CD8-positive, alpha-beta memory T cell (primary cell): ENCODE measurements at regions of chr1 and their contacts with region 1.

Region 1: GRCh38 chr1:25810341-25811299 is 9.1 kb upstream of the MTFR1L start:
- DNase-seq: peak; percentile 70 to 83 (median 74)
- H3K4me3 ChIP-seq: no peak overlapping the region
- H3K4me3 Mint-ChIP-seq: no peak overlapping the region
- H3K27ac ChIP-seq: no peak overlapping the region
- H3K27ac Mint-ChIP-seq: peak overlapping the region in 1 of 8 donors; percentile 33
- H3K4me1 ChIP-seq: peaks cover 8% of the 10 kb centered on the region
- H3K4me1 Mint-ChIP-seq: peaks cover 0 to 5% (median 2%) of the 10 kb centered on the region in 3 donors
- H3K27me3 ChIP-seq: no peaks in the 10 kb centered on the region
- H3K27me3 Mint-ChIP-seq: no peaks in the 10 kb centered on the region

Region 2: DNA sequence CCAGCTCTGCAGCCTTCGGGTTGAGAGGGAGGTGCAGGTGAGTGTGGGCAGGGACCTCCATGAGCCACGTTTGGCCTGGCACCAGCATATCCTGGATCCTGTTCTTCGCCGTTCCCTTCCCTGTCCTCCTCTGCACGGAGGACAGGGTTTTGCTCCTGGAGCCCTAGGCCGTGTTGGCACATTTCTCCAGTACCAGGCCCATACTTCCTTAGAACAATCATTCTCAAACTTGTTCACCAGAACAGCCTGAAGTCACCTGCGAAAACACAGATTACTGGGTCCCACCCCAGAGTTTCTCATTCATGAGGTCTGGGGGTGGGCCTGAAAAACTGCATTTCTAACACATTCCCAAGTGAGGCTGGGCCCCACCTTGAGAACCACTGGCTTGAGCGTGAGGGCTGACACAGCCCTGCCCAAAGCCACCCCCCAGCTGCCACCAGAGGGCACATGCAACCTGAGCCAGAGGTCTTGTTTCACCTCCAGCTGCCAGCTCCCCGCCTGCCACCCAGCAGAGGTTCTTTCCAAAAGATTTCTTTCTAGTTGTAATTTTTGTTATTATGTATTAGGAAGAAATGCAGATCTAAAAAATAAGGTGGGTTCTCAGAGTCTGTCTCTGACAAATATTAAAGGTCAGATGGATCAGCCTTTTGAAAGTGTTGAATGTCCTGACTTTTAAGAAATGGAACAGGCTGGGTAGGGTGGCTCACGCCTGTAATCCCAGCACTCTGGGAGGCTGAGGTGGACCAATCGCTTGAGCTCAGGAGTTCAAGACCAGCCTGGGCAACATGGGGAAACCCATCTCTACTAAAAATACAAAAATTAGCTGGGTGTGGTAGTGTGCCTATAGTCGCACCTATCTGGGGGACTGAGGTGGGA is 306.8 kb before region 1 on chr1:
- CTCF ChIA-PET with region 1: interaction called, 20 read pairs
- POLR2A ChIA-PET with region 1: no interaction called
- DNase-seq: peak; percentile 43 to 78 (median 53)
- H3K4me3 ChIP-seq: no peak overlapping the region
- H3K4me3 Mint-ChIP-seq: no peak overlapping the region
- H3K27ac ChIP-seq: no peak overlapping the region
- H3K27ac Mint-ChIP-seq: peak overlapping the region in 5 of 8 donors; percentile 26 to 94 (median 39)
- H3K4me1 ChIP-seq: peaks cover 23% of the 10 kb centered on the region
- H3K4me1 Mint-ChIP-seq: peaks cover 8 to 25% (median 19%) of the 10 kb centered on the region in 3 donors
- H3K27me3 ChIP-seq: no peaks in the 10 kb centered on the region
- H3K27me3 Mint-ChIP-seq: no peaks in the 10 kb centered on the region

Region 3: DNA sequence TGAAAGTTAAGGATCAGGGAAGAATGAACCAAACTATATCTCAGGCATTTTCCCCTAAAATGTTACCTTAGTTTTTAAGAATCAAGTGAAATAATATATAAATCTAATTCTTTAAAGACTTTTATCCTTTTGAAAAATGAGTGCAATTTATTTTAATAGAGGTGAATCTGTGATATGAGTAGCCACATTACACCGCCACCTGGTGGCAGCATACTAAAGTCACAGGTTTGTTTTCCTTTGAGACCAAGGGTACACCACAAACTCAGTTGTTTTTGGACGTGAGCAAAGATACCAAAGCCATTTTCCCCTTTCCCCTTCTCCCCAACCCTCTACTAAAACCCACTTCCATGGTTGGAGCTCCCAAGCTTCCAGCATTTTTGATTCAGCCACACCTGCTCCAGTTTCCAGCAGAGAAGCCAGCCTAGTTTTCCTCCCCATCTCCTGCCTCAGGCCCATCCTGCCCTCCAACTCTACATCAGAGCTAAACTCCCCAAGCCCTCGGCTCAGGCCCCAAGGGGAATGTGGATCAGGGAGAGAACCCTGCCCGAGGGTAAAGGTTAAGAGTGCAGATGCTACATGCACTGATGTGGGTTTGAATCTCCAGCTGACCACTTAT is 290.1 kb before region 1 on chr1:
- CTCF ChIA-PET with region 1: interaction called, 14 read pairs
- POLR2A ChIA-PET with region 1: no interaction called
- DNase-seq: peak; percentile 43 to 77 (median 60)
- H3K4me3 ChIP-seq: no peak overlapping the region
- H3K4me3 Mint-ChIP-seq: no peak overlapping the region
- H3K27ac ChIP-seq: no peak overlapping the region
- H3K27ac Mint-ChIP-seq: peak overlapping the region in 7 of 8 donors; percentile 19 to 90 (median 65)
- H3K4me1 ChIP-seq: peaks cover 6% of the 10 kb centered on the region
- H3K4me1 Mint-ChIP-seq: peaks cover 9 to 11% (median 10%) of the 10 kb centered on the region in 3 donors
- H3K27me3 ChIP-seq: no peaks in the 10 kb centered on the region
- H3K27me3 Mint-ChIP-seq: peaks cover 0 to 3% of the 10 kb centered on the region in 2 donors

Region 4: GRCh38 chr1:25572708-25573600 is 237.7 kb before region 1 on chr1:
- CTCF ChIA-PET with region 1: interaction called, 10 read pairs
- POLR2A ChIA-PET with region 1: no interaction called
- DNase-seq: peak in 4 of 5 donors; percentile 27 to 68 (median 46)
- H3K4me3 ChIP-seq: no peak overlapping the region
- H3K4me3 Mint-ChIP-seq: peak overlapping the region in 2 of 7 donors; percentile 24 to 27
- H3K27ac ChIP-seq: no peak overlapping the region
- H3K27ac Mint-ChIP-seq: peak overlapping the region in 4 of 8 donors; percentile 22 to 79 (median 54)
- H3K4me1 ChIP-seq: peaks cover 42% of the 10 kb centered on the region
- H3K4me1 Mint-ChIP-seq: peaks cover 19 to 63% (median 21%) of the 10 kb centered on the region in 3 donors
- H3K27me3 ChIP-seq: no peaks in the 10 kb centered on the region
- H3K27me3 Mint-ChIP-seq: no peaks in the 10 kb centered on the region

Region 5: GRCh38 chr1:25608488-25609178 is 202.0 kb before region 1 on chr1:
- CTCF ChIA-PET with region 1: interaction called, 24 read pairs
- POLR2A ChIA-PET with region 1: interaction called, 3 read pairs
- DNase-seq: peak; percentile 79 to 89 (median 82)
- H3K4me3 ChIP-seq: peak overlapping the region; percentile 45
- H3K4me3 Mint-ChIP-seq: peak overlapping the region in 5 of 7 donors; percentile 2 to 63 (median 25)
- H3K27ac ChIP-seq: no peak overlapping the region
- H3K27ac Mint-ChIP-seq: peak overlapping the region in 4 of 8 donors; percentile 3 to 21 (median 10)
- H3K4me1 ChIP-seq: no peaks in the 10 kb centered on the region
- H3K4me1 Mint-ChIP-seq: peaks cover 4 to 21% (median 19%) of the 10 kb centered on the region in 3 donors
- H3K27me3 ChIP-seq: no peaks in the 10 kb centered on the region
- H3K27me3 Mint-ChIP-seq: peaks cover 4 to 5% of the 10 kb centered on the region in 2 donors

Region 6: GRCh38 chr1:25774921-25775801 is 35.5 kb before region 1 on chr1:
- CTCF ChIA-PET with region 1: interaction called, 10 read pairs
- POLR2A ChIA-PET with region 1: no interaction called
- DNase-seq: peak; percentile 62 to 94 (median 90)
- H3K4me3 ChIP-seq: peak overlapping the region; percentile 59
- H3K4me3 Mint-ChIP-seq: peak overlapping the region; percentile 35 to 89 (median 78)
- H3K27ac ChIP-seq: no peak overlapping the region
- H3K27ac Mint-ChIP-seq: peak overlapping the region; percentile 79 to 99 (median 92)
- H3K4me1 ChIP-seq: peaks cover 72% of the 10 kb centered on the region
- H3K4me1 Mint-ChIP-seq: peaks cover 41 to 55% (median 51%) of the 10 kb centered on the region in 3 donors
- H3K27me3 ChIP-seq: no peaks in the 10 kb centered on the region
- H3K27me3 Mint-ChIP-seq: no peaks in the 10 kb centered on the region

Region 7: GRCh38 chr1:25796811-25797458 is 13.7 kb before region 1 on chr1:
- CTCF ChIA-PET with region 1: interaction called, 13 read pairs
- POLR2A ChIA-PET with region 1: no interaction called
- DNase-seq: peak; percentile 71 to 87 (median 75)
- H3K4me3 ChIP-seq: peak overlapping the region; percentile 42
- H3K4me3 Mint-ChIP-seq: peak overlapping the region; percentile 59 to 81 (median 71)
- H3K27ac ChIP-seq: peak overlapping the region; percentile 3
- H3K27ac Mint-ChIP-seq: peak overlapping the region; percentile 73 to 95 (median 90)
- H3K4me1 ChIP-seq: peaks cover 55% of the 10 kb centered on the region
- H3K4me1 Mint-ChIP-seq: peaks cover 35 to 57% (median 41%) of the 10 kb centered on the region in 3 donors
- H3K27me3 ChIP-seq: no peaks in the 10 kb centered on the region
- H3K27me3 Mint-ChIP-seq: peaks cover 0 to 3% of the 10 kb centered on the region in 2 donors

Region 8: DNA sequence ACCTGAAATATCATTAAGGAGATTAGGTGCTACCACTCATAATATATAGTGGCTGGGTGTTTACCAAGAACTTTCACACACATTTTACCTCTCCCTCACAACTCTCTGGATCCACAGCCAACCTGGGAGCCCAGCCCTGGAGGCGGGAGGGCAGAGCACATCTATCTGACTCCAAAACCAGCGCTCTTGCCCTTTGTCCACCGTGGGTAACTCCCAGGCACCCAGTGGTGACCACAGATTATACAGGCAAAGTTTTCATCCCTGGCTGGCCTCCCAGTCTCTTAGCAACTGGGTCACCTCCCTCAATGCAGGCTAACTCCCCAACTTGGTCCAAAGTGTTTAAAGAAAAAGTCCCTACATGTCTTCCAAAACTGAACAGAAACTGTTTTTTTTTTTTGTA is 62.5 kb after region 1 on chr1:
- CTCF ChIA-PET with region 1: no interaction called
- POLR2A ChIA-PET with region 1: no interaction called
- DNase-seq: no peak
- H3K4me3 ChIP-seq: no peak overlapping the region
- H3K4me3 Mint-ChIP-seq: no peak overlapping the region
- H3K27ac ChIP-seq: no peak overlapping the region
- H3K27ac Mint-ChIP-seq: peak overlapping the region in 1 of 8 donors; percentile 33
- H3K4me1 ChIP-seq: peaks cover 11% of the 10 kb centered on the region
- H3K4me1 Mint-ChIP-seq: peaks cover 5 to 10% (median 8%) of the 10 kb centered on the region in 3 donors
- H3K27me3 ChIP-seq: no peaks in the 10 kb centered on the region
- H3K27me3 Mint-ChIP-seq: peaks cover 0 to 4% of the 10 kb centered on the region in 2 donors

Region 9: GRCh38 chr1:25922056-25922969 is 111.7 kb after region 1 on chr1:
- CTCF ChIA-PET with region 1: no interaction called
- POLR2A ChIA-PET with region 1: no interaction called
- DNase-seq: peak; percentile 31 to 75 (median 61)
- H3K4me3 ChIP-seq: peak overlapping the region; percentile 53
- H3K4me3 Mint-ChIP-seq: peak overlapping the region; percentile 84 to 95 (median 86)
- H3K27ac ChIP-seq: no peak overlapping the region
- H3K27ac Mint-ChIP-seq: peak overlapping the region; percentile 32 to 95 (median 72)
- H3K4me1 ChIP-seq: peaks cover 35% of the 10 kb centered on the region
- H3K4me1 Mint-ChIP-seq: peaks cover 27 to 36% (median 29%) of the 10 kb centered on the region in 3 donors
- H3K27me3 ChIP-seq: no peaks in the 10 kb centered on the region
- H3K27me3 Mint-ChIP-seq: no peaks in the 10 kb centered on the region